GM23248 (cell line): ENCODE measurements at regions of chr7 and their contacts with region 1.

Region 1: GRCh38 chr7:70052691-70053090 is 454.4 kb downstream of the AUTS2 start:
- DNase-seq: peak; percentile 58
- H3K4me3 ChIP-seq: no peak overlapping the region
- H3K27ac ChIP-seq: no peak overlapping the region
- H3K4me1 ChIP-seq: peaks cover 16% of the 10 kb centered on the region
- H3K27me3 ChIP-seq: no peaks in the 10 kb centered on the region

Region 2: GRCh38 chr7:70681469-70682350 is 629.0 kb after region 1 on chr7:
- in situ Hi-C with region 1: loop called (anchors 10 kb)
- DNase-seq: no peak
- H3K4me3 ChIP-seq: no peak overlapping the region
- H3K27ac ChIP-seq: no peak overlapping the region
- H3K4me1 ChIP-seq: peaks cover 26% of the 10 kb centered on the region
- H3K27me3 ChIP-seq: no peaks in the 10 kb centered on the region